H1 (cell line): ENCODE measurements at regions of chr10 and their contacts with region 1.

Region 1: GRCh38 chr10:118543714-118544400 is 51.6 kb downstream of the PRLHR start:
- DNase-seq: peak in 1 of 2 experiments; percentile 82
- H3K4me3 ChIP-seq: no peak overlapping the region
- H3K27ac ChIP-seq: no peak overlapping the region
- H3K4me1 ChIP-seq: no peaks in the 10 kb centered on the region
- H3K27me3 ChIP-seq: no peaks in the 10 kb centered on the region
- CTCF ChIP-seq: peak; percentile 89 to 95 (median 91)
- EP300 ChIP-seq: no peak
- POLR2A ChIP-seq: no peak
- RAD21 ChIP-seq: peak; percentile 80 to 88

Region 2: DNA sequence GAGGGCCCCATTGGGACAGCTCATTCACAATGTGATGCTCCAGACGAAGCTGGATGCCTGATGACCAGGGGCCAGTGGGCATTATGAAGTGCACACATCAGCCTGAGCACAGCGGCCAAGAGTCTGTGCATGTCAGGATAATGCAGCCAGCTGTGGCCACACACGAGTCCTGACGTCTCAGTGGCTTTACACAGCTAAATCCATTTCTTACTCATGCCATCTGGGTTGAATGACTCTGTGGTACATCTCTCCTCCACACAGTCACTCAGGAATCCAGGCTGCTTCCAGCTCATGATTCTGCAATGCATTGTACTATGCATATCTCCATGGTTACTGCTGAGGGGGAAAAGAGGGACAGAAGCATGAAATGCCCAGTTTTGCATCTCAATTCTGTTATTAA is 72.0 kb before region 1 on chr10:
- CTCF ChIA-PET with region 1: interaction called, 17 read pairs
- POLR2A ChIA-PET with region 1: no interaction called
- DNase-seq: no peak
- H3K4me3 ChIP-seq: no peak overlapping the region
- H3K27ac ChIP-seq: no peak overlapping the region
- H3K4me1 ChIP-seq: peaks cover 0 to 3% (median 0%) of the 10 kb centered on the region in 4 experiments; a peak in 1 of 7 replicates
- H3K27me3 ChIP-seq: no peaks in the 10 kb centered on the region
- CTCF ChIP-seq: no peak
- EP300 ChIP-seq: no peak
- POLR2A ChIP-seq: no peak
- RAD21 ChIP-seq: no peak

Region 3: GRCh38 chr10:118488710-118489497 is 55.0 kb before region 1 on chr10:
- CTCF ChIA-PET with region 1: no interaction called
- POLR2A ChIA-PET with region 1: no interaction called
- DNase-seq: no peak
- H3K4me3 ChIP-seq: no peak overlapping the region
- H3K27ac ChIP-seq: no peak overlapping the region
- H3K4me1 ChIP-seq: peaks cover 0 to 4% (median 0%) of the 10 kb centered on the region in 4 experiments; a peak in 1 of 7 replicates
- H3K27me3 ChIP-seq: no peaks in the 10 kb centered on the region
- CTCF ChIP-seq: no peak
- EP300 ChIP-seq: no peak
- POLR2A ChIP-seq: no peak
- RAD21 ChIP-seq: no peak

Region 4: GRCh38 chr10:118531105-118531852 is 12.6 kb before region 1 on chr10:
- CTCF ChIA-PET with region 1: interaction called, 15 read pairs
- POLR2A ChIA-PET with region 1: no interaction called
- DNase-seq: no peak
- H3K4me3 ChIP-seq: no peak overlapping the region
- H3K27ac ChIP-seq: no peak overlapping the region
- H3K4me1 ChIP-seq: no peaks in the 10 kb centered on the region
- H3K27me3 ChIP-seq: no peaks in the 10 kb centered on the region
- CTCF ChIP-seq: no peak
- EP300 ChIP-seq: no peak
- POLR2A ChIP-seq: no peak
- RAD21 ChIP-seq: no peak

Region 5: DNA sequence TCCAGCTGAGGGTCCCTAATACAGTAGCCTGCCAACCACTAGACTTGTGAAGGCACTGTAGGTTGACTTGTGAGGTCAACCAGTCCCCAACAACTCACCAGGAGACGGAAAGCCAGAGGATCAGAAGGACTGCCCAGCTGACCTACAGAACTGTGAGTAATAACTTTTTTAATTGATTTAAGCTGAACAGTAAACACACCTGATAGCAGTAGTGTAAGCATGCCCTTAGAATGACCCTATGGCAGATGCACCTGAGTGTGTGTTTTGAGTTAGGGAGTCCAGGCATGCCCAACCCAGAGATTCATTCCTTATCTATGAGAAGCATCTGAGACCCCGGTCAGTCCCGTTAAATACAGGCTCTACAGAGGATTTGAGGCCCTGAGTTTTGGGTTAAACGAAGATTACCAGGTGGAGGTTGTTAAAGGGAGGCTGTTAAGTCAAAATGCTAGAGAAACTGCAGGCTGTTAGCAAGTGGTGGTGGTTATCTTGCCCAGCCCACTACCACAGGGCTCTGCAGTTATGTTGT is 37.6 kb after region 1 on chr10:
- CTCF ChIA-PET with region 1: no interaction called
- POLR2A ChIA-PET with region 1: no interaction called
- DNase-seq: no peak
- H3K4me3 ChIP-seq: no peak overlapping the region
- H3K27ac ChIP-seq: no peak overlapping the region
- H3K4me1 ChIP-seq: no peaks in the 10 kb centered on the region
- H3K27me3 ChIP-seq: peaks cover 0 to 3% (median 0%) of the 10 kb centered on the region in 4 experiments; a peak in 1 of 7 replicates
- CTCF ChIP-seq: no peak
- EP300 ChIP-seq: no peak
- POLR2A ChIP-seq: no peak
- RAD21 ChIP-seq: no peak